Adrenal gland (tissue), 19 donors: ENCODE measurements at regions of chr16 and their contacts with region 1.

Region 1: DNA sequence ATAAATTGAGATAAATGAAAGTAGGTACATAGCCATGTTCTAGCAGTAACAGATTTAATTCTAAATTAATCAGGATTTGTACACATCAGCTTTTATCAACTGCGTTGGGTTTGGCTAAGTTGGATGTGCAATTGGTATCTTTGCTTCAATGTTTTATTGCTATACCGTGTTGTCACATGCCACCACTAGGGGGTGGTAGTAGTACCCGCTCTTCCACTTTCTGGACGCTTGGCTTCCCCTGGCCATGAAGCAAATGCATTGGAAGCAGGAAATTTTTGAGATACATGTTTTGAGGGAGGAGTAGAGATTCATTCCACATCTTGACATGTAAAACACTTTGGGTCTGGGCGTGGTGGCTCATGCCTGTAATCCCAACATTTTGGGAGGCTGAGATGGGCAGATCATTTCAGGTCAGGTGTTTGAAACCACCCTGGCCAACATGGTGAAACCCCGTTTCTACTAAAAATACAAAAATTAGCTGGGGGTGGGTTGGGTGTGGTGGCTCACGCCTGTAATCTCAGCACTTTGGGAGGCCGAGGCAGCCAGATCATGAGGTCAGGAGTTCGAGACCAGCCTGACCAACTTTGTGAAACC is 58.6 kb downstream of the EMP2 start:
- DNase-seq: peak; percentile 65 to 84 (median 76)
- H3K4me3 ChIP-seq: no peak overlapping the region
- H3K27ac ChIP-seq: no peak overlapping the region
- H3K4me1 ChIP-seq: no peaks in the 10 kb centered on the region
- H3K27me3 ChIP-seq: no peaks in the 10 kb centered on the region
- CTCF ChIP-seq: peak; percentile 66 to 86 (median 84)
- POLR2A ChIP-seq: no peak

Region 2: GRCh38 chr16:10737068-10737625 is 215.4 kb after region 1 on chr16:
- intact Hi-C with region 1: loop called (anchors 2 to 5 kb)
- DNase-seq: peak; percentile 61 to 88 (median 74)
- H3K4me3 ChIP-seq: peak overlapping the region in 1 of 4 donors; percentile 24
- H3K27ac ChIP-seq: peak overlapping the region; percentile 24 to 85 (median 65)
- H3K4me1 ChIP-seq: peaks cover 16 to 18% of the 10 kb centered on the region in 2 donors
- H3K27me3 ChIP-seq: no peaks in the 10 kb centered on the region
- CTCF ChIP-seq: peak; percentile 90 to 98 (median 96)
- POLR2A ChIP-seq: no peak